ENCODE measurements at regions of chr12 and their contacts with region 1.

Region 1: DNA sequence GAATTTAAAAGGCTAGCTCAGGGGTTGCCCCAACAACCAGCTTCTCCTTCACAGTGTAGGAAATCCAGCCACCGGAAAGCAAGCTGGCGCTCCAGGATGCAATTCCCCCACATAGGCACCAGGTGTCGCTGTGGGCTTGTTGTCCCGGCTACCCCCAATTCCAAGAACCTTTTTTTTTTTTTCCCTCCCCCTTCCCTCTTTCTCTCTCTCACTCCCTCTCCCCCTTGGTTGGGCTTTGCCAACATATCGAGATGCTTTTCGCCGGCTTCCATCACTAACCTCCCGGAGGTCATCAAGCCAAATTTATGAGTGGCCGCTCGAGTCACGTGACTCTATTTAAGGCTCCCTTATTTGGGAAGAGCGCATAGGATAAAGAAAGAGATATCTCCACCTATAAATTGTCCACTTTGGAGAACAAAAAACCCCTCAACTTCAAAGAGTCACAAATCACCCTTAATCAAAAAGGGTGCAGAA is at the start of gene HOXC5:
- ATAC-seq: peak in 7 of 8 experiments; percentile 2 to 47 (median 34)
- H3K4me3 ChIP-seq: peak within 1 kb of the TSS; percentile 41 to 62 (median 49)
- H3K27ac ChIP-seq: peak within 1 kb of the TSS; percentile 94
- H3K4me1 ChIP-seq: peaks cover 49 to 72% of the 10 kb centered on the region in 2 donors
- total RNA-seq, gene HOXC5: 4.4 to 49.2 (median 10.4) TPM

Region 2: DNA sequence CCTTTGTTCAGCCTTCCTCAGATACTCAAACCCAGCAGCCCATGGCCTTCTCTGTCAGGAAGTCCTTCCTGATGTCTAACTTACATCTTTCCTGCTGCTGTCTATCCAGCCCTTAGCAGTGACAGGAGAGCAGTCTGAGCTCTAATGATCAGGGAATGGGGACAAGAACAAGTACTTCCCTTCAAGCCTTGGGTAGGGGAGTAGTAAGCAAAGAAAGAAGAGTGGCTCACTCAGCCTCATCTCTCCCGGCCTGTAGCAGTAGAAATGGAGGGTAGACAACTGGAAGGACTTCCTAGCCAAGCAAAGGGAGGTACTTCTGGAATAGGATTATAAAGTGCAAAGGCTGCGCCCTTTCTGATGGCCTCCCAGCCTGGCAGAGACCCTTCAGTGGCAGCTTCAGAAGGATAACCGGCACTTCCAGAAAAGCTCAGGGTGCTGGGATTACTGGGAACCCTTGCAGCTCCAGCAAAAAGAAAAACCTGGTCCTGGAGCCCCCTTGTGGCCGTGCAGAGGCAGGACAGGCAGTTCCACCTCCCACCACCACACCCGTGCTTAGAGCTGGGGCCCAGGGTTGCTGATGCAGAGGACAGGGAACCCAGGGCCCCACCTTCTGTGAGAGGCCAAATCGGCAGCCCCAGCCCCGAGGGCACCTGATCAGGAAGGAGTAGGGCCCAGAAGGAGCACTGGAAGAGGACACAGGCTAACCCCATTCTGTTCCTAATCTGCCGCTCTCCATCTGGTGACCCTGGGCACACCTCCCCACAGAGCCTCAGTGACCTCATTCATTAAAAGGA is 168.5 kb after region 1 on chr12:
- in situ Hi-C with region 1: loop called in 7 of 9 experiments (anchors 5 to 25 kb)
- ATAC-seq: peak; percentile 56 to 80 (median 74)
- H3K4me3 ChIP-seq: no peak overlapping the region
- H3K27ac ChIP-seq: no peak overlapping the region
- H3K4me1 ChIP-seq: peaks cover 28 to 33% of the 10 kb centered on the region in 2 donors